ENCODE measurements at regions of chr16 and their contacts with region 1.

Region 1: GRCh38 chr16:76598498-76598897 is 321.3 kb downstream of the CNTNAP4 start:
- DNase-seq: no peak
- H3K4me3 ChIP-seq: no peak overlapping the region
- H3K27ac ChIP-seq: no peak overlapping the region
- H3K4me1 ChIP-seq: no peaks in the 10 kb centered on the region
- H3K27me3 ChIP-seq: no peaks in the 10 kb centered on the region
- CTCF ChIP-seq: no peak

Region 2: GRCh38 chr16:76541070-76541469 is 57.4 kb before region 1 on chr16:
- intact Hi-C with region 1: loop called (anchors 5 kb)
- DNase-seq: no peak
- H3K4me3 ChIP-seq: no peak overlapping the region
- H3K27ac ChIP-seq: no peak overlapping the region
- H3K4me1 ChIP-seq: no peaks in the 10 kb centered on the region
- H3K27me3 ChIP-seq: no peaks in the 10 kb centered on the region
- CTCF ChIP-seq: no peak

Measured in colonic mucosa (tissue), 4 donors.